PC-9 (cell line): ENCODE measurements at regions of chr6 and their contacts with region 1.

Region 1: DNA sequence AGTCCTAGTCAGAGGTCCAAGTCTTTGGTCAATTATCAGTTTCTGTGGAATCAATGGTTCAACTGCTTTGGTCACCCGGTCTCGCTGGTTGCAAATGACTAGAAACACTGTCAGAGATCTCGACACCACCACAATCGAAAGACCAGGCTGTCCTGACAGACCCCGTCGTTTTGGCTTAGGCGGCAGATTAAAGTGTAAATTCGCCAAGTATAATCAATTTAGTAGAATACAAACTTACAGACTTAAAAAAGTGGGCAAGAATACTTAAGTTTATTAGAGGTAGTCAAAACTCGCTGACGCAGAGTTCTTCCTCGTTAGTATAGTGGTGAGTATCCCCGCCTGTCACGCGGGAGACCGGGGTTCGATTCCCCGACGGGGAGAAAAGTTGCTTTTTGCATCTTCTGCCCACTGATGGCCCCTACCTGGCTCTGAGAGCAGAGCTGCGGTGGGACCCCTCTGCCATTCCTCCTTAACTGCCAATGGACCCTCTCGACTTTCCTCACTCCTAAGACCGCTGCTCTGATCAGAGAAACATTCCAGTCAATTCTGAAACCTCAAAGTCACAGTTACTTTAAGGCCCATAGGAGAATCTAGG is 30.6 kb upstream of the ZNF184 start:
- DNase-seq: peak; percentile 66 to 75
- H3K4me3 ChIP-seq: peak overlapping the region; percentile 73
- H3K27ac ChIP-seq: peak overlapping the region; percentile 57
- H3K4me1 ChIP-seq: peaks cover 26% of the 10 kb centered on the region
- H3K27me3 ChIP-seq: no peaks in the 10 kb centered on the region
- CTCF ChIP-seq: no peak

Region 2: DNA sequence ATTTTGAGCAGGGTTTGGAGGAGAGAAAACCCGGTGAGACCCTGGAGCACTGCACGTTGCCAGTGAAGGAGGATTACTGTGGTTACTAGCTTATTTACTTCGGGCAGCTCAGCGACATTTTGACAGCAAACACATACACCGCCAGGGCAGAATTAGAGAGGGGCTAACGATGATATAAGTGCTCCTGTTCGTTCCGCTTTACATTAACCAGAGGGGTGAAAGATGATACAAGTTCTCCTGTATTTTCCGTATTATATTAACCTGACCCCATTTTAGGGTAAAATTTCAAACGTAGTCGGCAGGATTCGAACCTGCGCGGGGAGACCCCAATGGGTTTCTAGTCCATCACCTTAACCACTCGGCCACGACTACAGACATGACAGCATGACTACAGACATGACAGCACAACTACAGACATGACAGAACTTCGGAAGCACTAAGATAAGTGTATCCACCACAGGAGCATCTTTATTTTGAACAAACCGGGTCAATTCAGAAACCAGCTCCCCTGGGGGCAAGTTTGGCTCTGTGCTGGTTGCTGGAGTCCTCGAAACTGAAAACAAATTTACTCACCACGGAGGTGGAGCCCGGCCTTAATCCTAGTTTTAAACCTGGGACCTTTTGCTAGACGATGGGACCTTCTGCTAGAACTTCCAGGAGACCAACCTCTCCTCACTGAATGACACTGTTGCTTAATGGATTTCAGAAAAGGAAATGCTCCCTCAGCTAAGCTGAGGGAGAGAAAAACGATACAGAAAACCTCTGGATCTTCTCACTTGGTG is 49.8 kb after region 1 on chr6:
- CTCF ChIA-PET with region 1: no interaction called
- POLR2A ChIA-PET with region 1: interaction called, 26 read pairs
- intact Hi-C with region 1: no loop called
- DNase-seq: peak in 1 of 2 experiments; percentile 57
- H3K4me3 ChIP-seq: peak overlapping the region; percentile 39; the same call in 1 of the 2 replicates
- H3K27ac ChIP-seq: peak overlapping the region; percentile 3; the same call in 1 of the 2 replicates
- H3K4me1 ChIP-seq: peaks cover 28% of the 10 kb centered on the region
- H3K27me3 ChIP-seq: no peaks in the 10 kb centered on the region
- CTCF ChIP-seq: no peak

Region 3: GRCh38 chr6:27599196-27599595 is 95.7 kb after region 1 on chr6:
- CTCF ChIA-PET with region 1: no interaction called
- POLR2A ChIA-PET with region 1: no interaction called
- intact Hi-C with region 1: no loop called
- DNase-seq: no peak
- H3K4me3 ChIP-seq: no peak overlapping the region
- H3K27ac ChIP-seq: no peak overlapping the region
- H3K4me1 ChIP-seq: no peaks in the 10 kb centered on the region; the same call in 1 of the 2 replicates
- H3K27me3 ChIP-seq: no peaks in the 10 kb centered on the region
- CTCF ChIP-seq: no peak